Naive thymus-derived CD4-positive, alpha-beta T cell (primary cell): ENCODE measurements at regions of chr1 and their contacts with region 1.

Region 1: DNA sequence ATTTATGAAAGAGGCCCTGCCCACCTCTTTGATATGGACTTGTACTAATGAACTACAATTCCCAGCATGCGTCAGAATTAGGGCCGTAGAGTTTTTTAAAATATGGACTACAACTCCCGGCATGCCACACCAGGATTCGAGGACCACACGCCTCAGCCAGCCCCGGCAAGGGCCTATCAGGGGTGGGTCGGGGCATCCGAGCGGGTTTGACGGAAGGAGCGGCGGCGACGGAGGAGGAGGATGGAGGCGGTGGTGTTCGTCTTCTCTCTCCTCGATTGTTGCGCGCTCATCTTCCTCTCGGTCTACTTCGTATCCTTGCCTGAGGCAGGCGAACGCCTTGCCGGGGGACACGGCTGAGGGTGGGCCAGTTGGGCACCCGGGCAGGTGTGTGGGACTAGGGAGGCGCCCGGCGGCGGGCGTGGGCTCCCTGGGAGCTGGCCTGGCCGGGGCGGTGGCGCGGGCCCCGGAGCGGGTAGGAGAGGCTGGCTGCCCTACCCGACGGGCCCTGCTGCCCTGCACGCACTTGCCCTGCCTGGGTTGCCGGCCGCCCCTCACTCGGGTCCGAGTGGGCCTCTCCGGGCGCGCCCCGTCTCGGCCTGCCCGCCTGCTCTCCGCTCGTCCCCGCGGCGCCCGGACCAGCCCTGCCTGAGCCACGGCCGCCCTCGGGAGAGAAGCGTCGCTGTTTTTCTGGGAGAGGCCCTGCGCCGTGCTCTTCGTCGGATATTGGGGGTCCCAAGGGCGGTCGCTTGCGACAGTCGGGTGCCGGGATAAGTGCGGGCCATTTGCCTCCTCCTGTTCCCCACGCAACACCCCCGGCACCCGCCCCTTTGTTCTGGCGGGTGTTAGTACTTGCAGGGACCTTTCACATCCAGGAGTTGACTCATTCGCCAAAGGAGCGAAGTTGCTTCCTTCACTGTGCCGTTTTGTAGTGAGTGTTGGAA is at the start of gene CNIH4:
- DNase-seq: peak; percentile 79 to 95 (median 92)
- ATAC-seq: peak; percentile 99
- H3K4me3 ChIP-seq: peak within 1 kb of the TSS; percentile 67
- H3K4me3 Mint-ChIP-seq: peak within 1 kb of the TSS; percentile 87 to 98 (median 94)
- H3K27ac ChIP-seq: peak within 1 kb of the TSS; percentile 83
- H3K27ac Mint-ChIP-seq: peak within 1 kb of the TSS; percentile 71 to 95 (median 89)
- H3K4me1 ChIP-seq: peaks cover 16 to 27% of the 10 kb centered on the region in 2 donors
- H3K4me1 Mint-ChIP-seq: peaks cover 23 to 58% (median 44%) of the 10 kb centered on the region in 7 donors
- H3K27me3 ChIP-seq: no peaks in the 10 kb centered on the region
- H3K27me3 Mint-ChIP-seq: no peaks in the 10 kb centered on the region
- total RNA-seq, gene CNIH4: 28.1 to 42.0 (median 39.8) TPM

Region 2: DNA sequence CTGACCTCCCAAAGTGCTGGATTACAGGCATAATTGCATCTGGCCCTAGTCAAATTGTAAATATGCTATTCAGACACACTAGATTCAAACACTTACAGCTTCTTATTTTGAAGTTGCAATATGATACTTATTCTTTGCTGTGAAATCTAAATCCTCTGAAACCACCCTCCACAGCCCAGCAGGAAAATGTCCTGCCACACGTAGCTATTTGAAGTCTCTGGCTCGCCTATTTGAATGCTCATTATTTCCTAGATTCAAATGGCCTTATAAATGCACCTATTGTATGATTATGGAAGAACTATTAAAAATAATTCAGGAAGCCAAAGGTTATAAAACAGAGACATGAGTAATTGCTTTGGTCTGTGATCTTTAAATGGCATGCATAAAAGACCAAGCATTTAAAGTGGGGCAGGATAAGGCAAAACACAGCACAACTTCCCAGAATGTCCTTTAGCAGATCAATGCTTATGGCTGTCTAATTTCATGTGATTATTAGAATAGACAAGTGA is 269.6 kb before region 1 on chr1:
- CTCF ChIA-PET with region 1: no interaction called
- POLR2A ChIA-PET with region 1: no interaction called
- intact Hi-C with region 1: no loop called
- DNase-seq: no peak
- ATAC-seq: no peak
- H3K4me3 ChIP-seq: no peak overlapping the region
- H3K4me3 Mint-ChIP-seq: no peak overlapping the region
- H3K27ac ChIP-seq: no peak overlapping the region
- H3K27ac Mint-ChIP-seq: no peak overlapping the region
- H3K4me1 ChIP-seq: no peaks in the 10 kb centered on the region
- H3K4me1 Mint-ChIP-seq: peaks cover 0 to 2% (median 0%) of the 10 kb centered on the region in 7 donors
- H3K27me3 ChIP-seq: no peaks in the 10 kb centered on the region
- H3K27me3 Mint-ChIP-seq: peaks cover 12 to 41% (median 27%) of the 10 kb centered on the region in 5 donors

Region 3: DNA sequence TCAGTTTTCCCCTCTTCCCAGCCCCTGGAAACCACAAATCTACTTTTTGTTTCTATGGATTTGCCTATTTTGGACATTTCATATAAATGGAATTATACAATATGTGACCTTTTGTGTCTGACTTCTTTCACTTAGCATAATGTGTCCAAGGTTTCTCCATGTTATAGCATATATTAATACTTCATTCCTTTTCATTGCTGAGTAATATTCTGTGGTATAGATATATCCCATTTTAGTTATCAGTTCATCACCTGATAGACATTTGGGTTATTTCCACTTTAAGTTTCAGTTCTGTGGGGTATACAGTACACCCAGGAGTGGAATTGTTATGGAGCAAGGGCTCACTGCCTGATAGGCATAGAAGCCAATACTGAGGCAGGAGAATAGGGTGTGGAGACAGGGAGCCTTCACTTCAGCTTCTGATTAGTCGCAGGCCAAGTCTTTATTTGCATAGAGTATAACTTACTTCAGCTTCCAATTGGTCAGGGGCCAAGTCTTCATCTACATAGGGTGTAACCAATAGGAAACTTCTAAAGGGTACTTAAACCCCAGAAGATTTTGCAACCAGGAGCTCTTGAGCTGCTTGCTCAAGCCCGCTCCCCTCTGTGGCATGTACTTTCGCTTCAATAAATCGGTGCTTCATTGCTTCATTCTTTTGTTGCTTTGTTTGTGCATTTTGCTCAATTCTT is 18.7 kb before region 1 on chr1:
- CTCF ChIA-PET with region 1: no interaction called
- POLR2A ChIA-PET with region 1: no interaction called
- intact Hi-C with region 1: loop called in 1 of 2 experiments (anchors 2 kb)
- DNase-seq: no peak
- ATAC-seq: no peak
- H3K4me3 ChIP-seq: no peak overlapping the region
- H3K4me3 Mint-ChIP-seq: no peak overlapping the region
- H3K27ac ChIP-seq: no peak overlapping the region
- H3K27ac Mint-ChIP-seq: peak overlapping the region in 1 of 9 donors; percentile 12
- H3K4me1 ChIP-seq: peaks cover 0 to 3% of the 10 kb centered on the region in 2 donors
- H3K4me1 Mint-ChIP-seq: peaks cover 4 to 25% (median 15%) of the 10 kb centered on the region in 7 donors
- H3K27me3 ChIP-seq: no peaks in the 10 kb centered on the region
- H3K27me3 Mint-ChIP-seq: peaks cover 0 to 6% (median 0%) of the 10 kb centered on the region in 5 donors

Region 4: GRCh38 chr1:224377676-224378006 is 20.7 kb after region 1 on chr1:
- CTCF ChIA-PET with region 1: interaction called, 6 read pairs
- POLR2A ChIA-PET with region 1: interaction called, 5 read pairs
- intact Hi-C with region 1: loop called (anchors 1 to 2 kb)
- DNase-seq: no peak
- ATAC-seq: peak; percentile 46
- H3K4me3 ChIP-seq: no peak overlapping the region
- H3K4me3 Mint-ChIP-seq: peak overlapping the region; percentile 34 to 82 (median 64)
- H3K27ac ChIP-seq: no peak overlapping the region
- H3K27ac Mint-ChIP-seq: peak overlapping the region; percentile 53 to 93 (median 81)
- H3K4me1 ChIP-seq: peaks cover 74 to 76% of the 10 kb centered on the region in 2 donors
- H3K4me1 Mint-ChIP-seq: peaks cover 74 to 97% (median 92%) of the 10 kb centered on the region in 7 donors
- H3K27me3 ChIP-seq: no peaks in the 10 kb centered on the region
- H3K27me3 Mint-ChIP-seq: no peaks in the 10 kb centered on the region

Region 5: GRCh38 chr1:224387302-224387912 is 30.5 kb after region 1 on chr1:
- CTCF ChIA-PET with region 1: no interaction called
- POLR2A ChIA-PET with region 1: interaction called, 13 read pairs
- intact Hi-C with region 1: no loop called
- DNase-seq: peak in 7 of 9 donors; percentile 37 to 74 (median 49)
- ATAC-seq: peak; percentile 84
- H3K4me3 ChIP-seq: no peak overlapping the region
- H3K4me3 Mint-ChIP-seq: peak overlapping the region in 8 of 10 donors; percentile 22 to 56 (median 46)
- H3K27ac ChIP-seq: peak overlapping the region; percentile 34
- H3K27ac Mint-ChIP-seq: peak overlapping the region; percentile 72 to 93 (median 86)
- H3K4me1 ChIP-seq: peaks cover 17 to 28% of the 10 kb centered on the region in 2 donors
- H3K4me1 Mint-ChIP-seq: peaks cover 23 to 64% (median 46%) of the 10 kb centered on the region in 7 donors
- H3K27me3 ChIP-seq: no peaks in the 10 kb centered on the region
- H3K27me3 Mint-ChIP-seq: no peaks in the 10 kb centered on the region